Head of caudate nucleus (tissue), 42 donors: ENCODE measurements at regions of chr12 and their contacts with region 1.

Region 1: DNA sequence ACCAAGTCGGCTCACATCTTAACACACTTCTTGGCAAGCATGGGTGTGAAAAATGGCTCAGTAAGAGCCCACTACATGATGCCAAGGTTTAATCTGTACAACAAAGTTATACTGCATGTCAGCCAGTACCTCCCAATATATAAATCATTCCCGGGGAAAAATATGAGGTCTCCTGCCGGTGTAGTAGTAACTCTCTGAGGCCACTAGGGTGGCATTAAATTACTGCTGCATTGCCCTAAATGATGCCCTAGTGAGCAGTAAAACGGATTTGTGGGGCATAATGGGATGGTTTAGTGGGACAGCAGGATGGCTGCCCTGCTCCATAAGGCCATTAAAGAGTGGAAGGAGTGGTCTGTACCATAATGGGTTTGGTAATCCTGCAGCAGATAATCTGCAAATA is 267.7 kb downstream of the MED13L start:
- DNase-seq: no peak

Region 2: GRCh38 chr12:116703214-116703795 is 693.5 kb after region 1 on chr12:
- intact Hi-C with region 1: loop called (anchors 10 kb)
- DNase-seq: peak; percentile 37 to 92 (median 82)